Activated CD4-positive, alpha-beta T cell treated with anti-CD3 and anti-CD28 coated beads, Interleukin-2, amount 10 ng/mL, durations not matched to agents 24 days and 14 days (primary cell): ENCODE measurements at regions of chr15 and their contacts with region 1.

Region 1: GRCh38 chr15:25790000-25790660 is 73.0 kb downstream of the ATP10A start:
- DNase-seq: peak; percentile 80
- H3K4me3 Mint-ChIP-seq: peak overlapping the region; percentile 60
- H3K27ac Mint-ChIP-seq: peak overlapping the region; percentile 93
- H3K4me1 Mint-ChIP-seq: peaks cover 54% of the 10 kb centered on the region
- H3K27me3 Mint-ChIP-seq: no peaks in the 10 kb centered on the region

Region 2: GRCh38 chr15:25670025-25670554 is 120.0 kb before region 1 on chr15:
- intact Hi-C with region 1: no loop called
- DNase-seq: no peak
- H3K4me3 Mint-ChIP-seq: no peak overlapping the region
- H3K27ac Mint-ChIP-seq: no peak overlapping the region
- H3K4me1 Mint-ChIP-seq: peaks cover 6% of the 10 kb centered on the region
- H3K27me3 Mint-ChIP-seq: peaks cover 29% of the 10 kb centered on the region

Region 3: GRCh38 chr15:25761971-25762662 is 28.0 kb before region 1 on chr15:
- intact Hi-C with region 1: loop called (anchors 1 kb)
- DNase-seq: peak; percentile 48
- H3K4me3 Mint-ChIP-seq: no peak overlapping the region
- H3K27ac Mint-ChIP-seq: no peak overlapping the region
- H3K4me1 Mint-ChIP-seq: peaks cover 6% of the 10 kb centered on the region
- H3K27me3 Mint-ChIP-seq: no peaks in the 10 kb centered on the region

Region 4: DNA sequence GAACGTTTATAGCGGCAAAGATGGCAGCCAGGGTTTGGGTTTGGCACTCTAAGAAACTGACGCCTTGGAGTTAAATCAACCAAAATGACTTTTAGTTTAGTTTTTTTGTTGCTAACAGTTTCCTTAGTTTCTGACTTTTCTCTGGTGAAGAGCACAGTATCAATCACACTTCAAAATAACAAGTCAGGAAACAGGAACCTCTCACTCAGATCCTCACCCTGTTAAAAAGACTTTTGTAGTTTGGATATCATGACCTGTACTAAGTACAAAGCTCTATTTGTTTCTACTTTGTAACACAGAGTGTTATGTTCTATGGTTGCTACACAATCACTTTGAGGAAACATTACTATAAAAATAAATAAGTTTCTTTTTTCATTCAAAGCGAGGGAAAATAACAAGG is 21.9 kb after region 1 on chr15:
- intact Hi-C with region 1: loop called (anchors 1 kb)
- DNase-seq: no peak
- H3K4me3 Mint-ChIP-seq: peak overlapping the region; percentile 78
- H3K27ac Mint-ChIP-seq: peak overlapping the region; percentile 85
- H3K4me1 Mint-ChIP-seq: peaks cover 59% of the 10 kb centered on the region
- H3K27me3 Mint-ChIP-seq: no peaks in the 10 kb centered on the region

Region 5: GRCh38 chr15:25832158-25832557 is 42.0 kb after region 1 on chr15:
- intact Hi-C with region 1: loop called (anchors 2 kb)
- DNase-seq: no peak
- H3K4me3 Mint-ChIP-seq: peak overlapping the region; percentile 33
- H3K27ac Mint-ChIP-seq: peak overlapping the region; percentile 72
- H3K4me1 Mint-ChIP-seq: peaks cover 37% of the 10 kb centered on the region
- H3K27me3 Mint-ChIP-seq: no peaks in the 10 kb centered on the region

Region 6: GRCh38 chr15:25850154-25851111 is 60.3 kb after region 1 on chr15:
- intact Hi-C with region 1: loop called (anchors 1 kb)
- DNase-seq: peak; percentile 90
- H3K4me3 Mint-ChIP-seq: peak overlapping the region; percentile 84
- H3K27ac Mint-ChIP-seq: peak overlapping the region; percentile 99
- H3K4me1 Mint-ChIP-seq: peaks cover 76% of the 10 kb centered on the region
- H3K27me3 Mint-ChIP-seq: no peaks in the 10 kb centered on the region

Region 7: DNA sequence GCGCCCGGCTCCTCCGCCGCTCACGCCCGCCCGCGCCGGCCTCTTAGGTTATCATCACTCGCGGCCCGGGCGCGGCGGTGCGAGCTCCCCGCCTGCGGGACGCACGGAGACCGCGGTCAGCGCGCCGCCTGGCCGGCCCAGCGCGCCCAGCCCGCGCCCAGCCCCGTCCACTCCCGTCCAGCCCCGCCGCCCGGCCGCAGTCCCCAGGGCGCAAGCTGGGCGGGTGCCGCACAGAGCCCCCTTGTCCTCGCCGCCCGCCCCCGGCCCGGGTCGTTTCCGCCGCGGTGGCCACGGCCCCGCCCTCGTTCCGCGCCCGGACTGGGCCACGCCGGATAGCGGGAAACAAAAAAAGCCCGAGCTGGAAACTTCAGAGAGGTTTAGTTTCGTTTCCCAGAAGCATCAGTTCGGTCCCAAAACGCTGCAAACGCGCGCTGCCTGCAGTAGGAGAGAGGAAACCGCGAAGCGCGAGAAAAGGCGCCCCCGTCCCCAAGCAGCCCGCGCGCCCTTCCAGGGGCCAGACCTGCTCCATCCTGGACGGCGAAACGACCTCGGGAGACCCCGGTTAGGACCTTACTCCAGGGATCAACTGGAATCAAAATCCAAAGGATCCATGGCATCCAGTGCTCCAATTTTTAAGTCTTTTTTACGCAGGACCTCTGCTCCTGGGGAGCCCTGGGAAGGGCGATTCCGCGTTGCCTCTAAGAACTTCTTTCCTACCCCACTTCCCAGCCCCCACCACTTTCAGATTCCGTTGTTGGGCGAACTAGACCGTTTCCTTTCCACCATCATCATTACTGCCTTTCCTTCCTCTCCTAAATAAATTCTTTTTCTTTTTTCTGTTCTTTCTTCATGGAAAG is 73.2 kb after region 1 on chr15 and contains the start of gene ATP10A:
- intact Hi-C with region 1: loop called (anchors 1 kb)
- DNase-seq: peak; percentile 93
- H3K4me3 Mint-ChIP-seq: peak within 1 kb of the TSS; percentile 97
- H3K27ac Mint-ChIP-seq: peak within 1 kb of the TSS; percentile 89
- H3K4me1 Mint-ChIP-seq: peaks cover 39% of the 10 kb centered on the region
- H3K27me3 Mint-ChIP-seq: peaks cover 5% of the 10 kb centered on the region
- total RNA-seq, gene ATP10A: 42.7 and 48.0 TPM in 2 replicates

Region 8: DNA sequence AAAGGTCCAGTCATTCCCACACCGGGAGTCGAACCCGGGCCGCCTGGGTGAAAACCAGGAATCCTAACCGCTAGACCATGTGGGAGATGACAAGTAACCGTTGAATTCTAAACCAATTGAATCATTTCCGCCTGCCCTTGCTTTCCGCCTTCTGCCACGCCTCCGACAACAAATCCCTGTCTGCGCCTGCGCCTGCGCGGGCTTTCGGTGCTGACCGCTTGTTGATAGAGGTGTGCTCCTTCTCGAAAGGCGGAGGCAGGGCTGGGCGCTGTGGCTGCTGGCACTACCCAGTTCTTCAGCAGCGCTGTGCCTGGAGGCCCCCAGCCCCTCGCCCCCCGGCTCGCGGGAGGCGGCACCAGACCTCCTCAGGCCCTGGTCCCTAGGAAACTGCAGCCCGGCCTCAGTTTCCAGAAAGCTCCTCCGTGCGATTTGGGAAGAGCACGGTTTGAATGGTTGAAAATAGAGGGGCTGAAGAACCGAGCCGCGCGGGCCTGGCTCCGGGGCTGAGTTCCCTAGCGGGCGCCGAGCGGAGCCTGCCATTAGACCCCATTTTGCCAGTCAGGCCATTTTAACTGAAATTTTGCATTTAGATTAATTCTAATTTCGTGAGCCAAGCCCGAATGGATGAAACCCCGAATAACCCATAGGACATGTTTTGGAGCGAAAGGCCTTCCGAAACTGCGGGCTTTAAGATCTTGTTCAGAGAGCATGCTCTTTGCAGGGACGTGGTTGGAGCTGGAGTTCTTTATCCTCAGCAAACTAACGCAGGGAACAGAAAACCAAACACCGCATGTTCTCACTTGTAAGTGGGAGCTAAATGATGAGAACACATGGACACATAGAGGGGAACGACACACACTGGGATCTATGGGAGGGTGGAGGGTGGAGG is 292.3 kb after region 1 on chr15:
- intact Hi-C with region 1: loop called (anchors 1 kb)
- DNase-seq: peak; percentile 98
- H3K4me3 Mint-ChIP-seq: peak overlapping the region; percentile 86
- H3K27ac Mint-ChIP-seq: peak overlapping the region; percentile 89
- H3K4me1 Mint-ChIP-seq: peaks cover 18% of the 10 kb centered on the region
- H3K27me3 Mint-ChIP-seq: peaks cover 11% of the 10 kb centered on the region